GM12878 (cell line): ENCODE measurements at regions of chr18 and their contacts with region 1.

Region 1: DNA sequence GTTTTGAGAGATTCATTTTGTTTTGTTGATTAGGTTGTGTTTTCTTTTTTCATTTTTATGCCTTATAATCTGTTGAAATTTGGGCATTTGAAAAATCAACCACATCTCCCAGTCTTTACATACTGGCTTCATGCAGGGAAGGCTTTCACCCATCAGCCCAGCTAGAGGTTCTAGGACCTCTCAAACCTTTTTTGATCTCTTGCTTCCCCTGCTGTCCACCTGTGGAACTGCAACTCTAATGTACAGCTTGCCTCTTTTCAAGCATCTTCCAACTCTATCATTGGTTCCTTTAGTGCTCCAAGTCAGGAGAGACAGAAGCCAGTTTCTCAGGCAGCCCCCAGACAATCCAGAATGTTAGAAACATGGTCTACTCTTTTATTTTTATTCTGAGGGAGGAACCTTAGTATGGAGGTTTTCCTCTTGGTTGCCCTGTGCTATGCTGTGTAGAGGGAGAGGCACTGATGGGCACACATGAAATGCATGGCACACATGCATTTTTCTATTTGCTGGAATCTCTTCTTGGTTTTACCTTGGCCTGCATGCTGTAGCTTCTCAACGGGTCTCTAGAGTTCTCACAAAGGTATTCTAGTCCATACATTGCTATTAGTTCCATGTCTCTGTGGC is 107.2 kb upstream of the L3MBTL4 start:
- DNase-seq: peak; percentile 15
- ATAC-seq: peak; percentile 75
- H3K4me3 ChIP-seq: no peak overlapping the region
- H3K27ac ChIP-seq: no peak overlapping the region
- H3K4me1 ChIP-seq: no peaks in the 10 kb centered on the region
- H3K27me3 ChIP-seq: no peaks in the 10 kb centered on the region
- CTCF ChIP-seq: peak; percentile 89 to 98 (median 95)
- EP300 ChIP-seq: no peak
- POLR2A ChIP-seq: no peak
- RAD21 ChIP-seq: peak; percentile 96

Region 2: GRCh38 chr18:5868218-5869115 is 653.4 kb before region 1 on chr18:
- CTCF ChIA-PET with region 1: interaction called, 37 read pairs
- POLR2A ChIA-PET with region 1: no interaction called
- RAD21 ChIA-PET with region 1: interaction called, 11 read pairs
- SMC1A ChIA-PET with region 1: interaction called, 18 read pairs
- in situ Hi-C with region 1: loop called (anchors 5 kb)
- intact Hi-C with region 1: loop called (anchors 1 kb)
- DNase-seq: peak; percentile 16
- ATAC-seq: peak; percentile 93
- H3K4me3 ChIP-seq: no peak overlapping the region
- H3K27ac ChIP-seq: no peak overlapping the region
- H3K4me1 ChIP-seq: no peaks in the 10 kb centered on the region
- H3K27me3 ChIP-seq: no peaks in the 10 kb centered on the region
- CTCF ChIP-seq: peak; percentile 69 to 87 (median 79)
- EP300 ChIP-seq: no peak
- POLR2A ChIP-seq: no peak
- RAD21 ChIP-seq: peak; percentile 97

Region 3: DNA sequence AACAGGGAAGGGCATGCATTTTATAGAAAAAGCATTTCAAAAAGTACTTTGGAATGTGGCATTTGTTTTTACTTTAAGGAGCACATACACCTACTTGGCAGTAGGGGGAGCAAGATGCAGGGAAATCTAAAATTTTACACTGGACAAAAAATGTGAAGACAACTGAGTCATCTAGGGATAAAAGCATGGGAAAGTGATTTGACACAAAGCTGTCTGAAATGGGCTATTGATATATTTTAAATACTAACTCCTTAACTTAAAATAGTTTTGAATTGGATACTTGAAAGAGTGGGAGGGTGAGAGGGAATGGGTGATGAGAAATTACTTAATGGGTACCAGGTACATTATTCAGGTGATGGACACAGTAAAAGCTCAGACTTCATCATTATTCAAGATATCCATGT is 642.4 kb before region 1 on chr18:
- CTCF ChIA-PET with region 1: interaction called, 73 read pairs
- POLR2A ChIA-PET with region 1: no interaction called
- RAD21 ChIA-PET with region 1: interaction called, 10 read pairs
- SMC1A ChIA-PET with region 1: interaction called, 27 read pairs
- in situ Hi-C with region 1: loop called (anchors 5 kb)
- intact Hi-C with region 1: loop called (anchors 1 kb)
- DNase-seq: no peak
- ATAC-seq: no peak
- H3K4me3 ChIP-seq: no peak overlapping the region
- H3K27ac ChIP-seq: no peak overlapping the region
- H3K4me1 ChIP-seq: no peaks in the 10 kb centered on the region
- H3K27me3 ChIP-seq: no peaks in the 10 kb centered on the region; a peak in 2 of 4 replicates
- CTCF ChIP-seq: peak; percentile 66 to 72 (median 70); a peak in 5 of 6 replicates
- EP300 ChIP-seq: no peak
- POLR2A ChIP-seq: no peak
- RAD21 ChIP-seq: peak; percentile 92

Region 4: DNA sequence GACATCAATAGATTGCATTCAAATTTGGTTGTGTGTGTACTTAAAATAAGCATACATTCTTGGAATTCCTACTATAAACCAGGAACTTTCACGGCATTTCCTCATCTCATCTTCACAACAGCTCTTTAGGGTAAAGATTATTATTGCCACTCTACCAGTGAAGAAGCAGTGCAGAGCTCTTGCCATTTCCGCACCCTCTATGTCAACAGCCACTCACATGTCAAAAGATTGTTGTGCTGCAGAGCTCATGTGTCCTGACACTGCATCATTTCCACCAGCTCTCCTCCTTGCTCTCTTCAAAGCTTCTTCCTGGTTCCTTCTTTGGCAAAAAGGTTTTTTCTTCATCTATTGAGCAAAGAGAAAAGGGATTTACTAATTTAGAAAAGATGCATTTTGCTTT is 80.7 kb before region 1 on chr18:
- CTCF ChIA-PET with region 1: no interaction called
- POLR2A ChIA-PET with region 1: no interaction called
- RAD21 ChIA-PET with region 1: no interaction called
- SMC1A ChIA-PET with region 1: no interaction called
- in situ Hi-C with region 1: no loop called
- intact Hi-C with region 1: no loop called
- DNase-seq: no peak
- ATAC-seq: no peak
- H3K4me3 ChIP-seq: no peak overlapping the region
- H3K27ac ChIP-seq: no peak overlapping the region
- H3K4me1 ChIP-seq: peaks cover 6% of the 10 kb centered on the region
- H3K27me3 ChIP-seq: no peaks in the 10 kb centered on the region
- CTCF ChIP-seq: no peak
- EP300 ChIP-seq: no peak
- POLR2A ChIP-seq: no peak
- RAD21 ChIP-seq: no peak

Region 5: GRCh38 chr18:6476190-6476589 is 45.7 kb before region 1 on chr18:
- CTCF ChIA-PET with region 1: no interaction called
- POLR2A ChIA-PET with region 1: no interaction called
- RAD21 ChIA-PET with region 1: no interaction called
- SMC1A ChIA-PET with region 1: no interaction called
- in situ Hi-C with region 1: loop called (anchors 5 kb)
- intact Hi-C with region 1: no loop called
- DNase-seq: no peak
- ATAC-seq: no peak
- H3K4me3 ChIP-seq: no peak overlapping the region
- H3K27ac ChIP-seq: no peak overlapping the region
- H3K4me1 ChIP-seq: no peaks in the 10 kb centered on the region
- H3K27me3 ChIP-seq: no peaks in the 10 kb centered on the region
- CTCF ChIP-seq: no peak
- EP300 ChIP-seq: no peak
- POLR2A ChIP-seq: no peak
- RAD21 ChIP-seq: no peak

Region 6: GRCh38 chr18:7805880-7806279 is 1284.0 kb after region 1 on chr18:
- CTCF ChIA-PET with region 1: no interaction called
- POLR2A ChIA-PET with region 1: no interaction called
- RAD21 ChIA-PET with region 1: no interaction called
- SMC1A ChIA-PET with region 1: no interaction called
- in situ Hi-C with region 1: no loop called
- intact Hi-C with region 1: no loop called
- DNase-seq: no peak
- ATAC-seq: no peak
- H3K4me3 ChIP-seq: no peak overlapping the region
- H3K27ac ChIP-seq: no peak overlapping the region
- H3K4me1 ChIP-seq: no peaks in the 10 kb centered on the region
- H3K27me3 ChIP-seq: no peaks in the 10 kb centered on the region
- CTCF ChIP-seq: no peak
- EP300 ChIP-seq: no peak
- POLR2A ChIP-seq: no peak
- RAD21 ChIP-seq: no peak